ENCODE measurements at regions of chr19 and their contacts with region 1.

Region 1: GRCh38 chr19:23249911-23250649 is at the start of gene ZNF724:
- DNase-seq: peak; percentile 85
- H3K4me3 ChIP-seq: peak within 1 kb of the TSS; percentile 64 to 84
- H3K27ac ChIP-seq: peak within 1 kb of the TSS; percentile 65 to 67; a peak in 3 of 4 replicates
- H3K4me1 ChIP-seq: no peaks in the 10 kb centered on the region
- H3K27me3 ChIP-seq: no peaks in the 10 kb centered on the region
- CTCF ChIP-seq: no peak
- EP300 ChIP-seq: no peak
- RAD21 ChIP-seq: no peak
- polyA plus RNA-seq, gene ZNF724: 0.56 and 0.57 TPM in 2 replicates

Region 2: DNA sequence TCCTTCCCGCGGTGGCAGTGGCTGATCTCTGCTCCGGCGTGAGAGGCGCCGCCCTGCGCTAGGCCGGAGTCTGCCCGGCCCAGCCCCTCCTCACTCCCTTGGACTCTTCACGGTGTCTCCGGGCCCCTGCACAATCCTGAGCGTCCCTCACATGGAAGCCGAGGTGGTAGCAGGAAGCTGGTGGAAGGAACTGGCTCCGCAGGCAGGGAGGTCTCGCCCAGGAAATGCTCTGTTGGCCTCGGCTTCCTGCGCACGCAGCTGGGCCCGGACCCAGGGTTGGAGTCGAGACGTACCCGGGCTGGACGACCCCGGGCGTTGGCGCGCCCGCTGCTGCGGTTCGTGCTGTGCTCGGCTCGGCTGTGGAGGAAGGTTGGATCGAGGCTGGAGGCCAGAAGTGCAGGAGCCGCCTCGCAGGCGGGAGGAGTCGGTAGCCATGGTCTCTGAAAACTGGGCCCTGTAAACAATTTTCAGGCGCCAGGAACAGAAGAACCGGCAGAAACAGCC is 46.2 kb before region 1 on chr19:
- CTCF ChIA-PET with region 1: no interaction called
- POLR2A ChIA-PET with region 1: no interaction called
- DNase-seq: no peak
- H3K4me3 ChIP-seq: no peak overlapping the region
- H3K27ac ChIP-seq: no peak overlapping the region
- H3K4me1 ChIP-seq: no peaks in the 10 kb centered on the region
- H3K27me3 ChIP-seq: no peaks in the 10 kb centered on the region
- CTCF ChIP-seq: no peak
- EP300 ChIP-seq: no peak
- RAD21 ChIP-seq: no peak

Region 3: DNA sequence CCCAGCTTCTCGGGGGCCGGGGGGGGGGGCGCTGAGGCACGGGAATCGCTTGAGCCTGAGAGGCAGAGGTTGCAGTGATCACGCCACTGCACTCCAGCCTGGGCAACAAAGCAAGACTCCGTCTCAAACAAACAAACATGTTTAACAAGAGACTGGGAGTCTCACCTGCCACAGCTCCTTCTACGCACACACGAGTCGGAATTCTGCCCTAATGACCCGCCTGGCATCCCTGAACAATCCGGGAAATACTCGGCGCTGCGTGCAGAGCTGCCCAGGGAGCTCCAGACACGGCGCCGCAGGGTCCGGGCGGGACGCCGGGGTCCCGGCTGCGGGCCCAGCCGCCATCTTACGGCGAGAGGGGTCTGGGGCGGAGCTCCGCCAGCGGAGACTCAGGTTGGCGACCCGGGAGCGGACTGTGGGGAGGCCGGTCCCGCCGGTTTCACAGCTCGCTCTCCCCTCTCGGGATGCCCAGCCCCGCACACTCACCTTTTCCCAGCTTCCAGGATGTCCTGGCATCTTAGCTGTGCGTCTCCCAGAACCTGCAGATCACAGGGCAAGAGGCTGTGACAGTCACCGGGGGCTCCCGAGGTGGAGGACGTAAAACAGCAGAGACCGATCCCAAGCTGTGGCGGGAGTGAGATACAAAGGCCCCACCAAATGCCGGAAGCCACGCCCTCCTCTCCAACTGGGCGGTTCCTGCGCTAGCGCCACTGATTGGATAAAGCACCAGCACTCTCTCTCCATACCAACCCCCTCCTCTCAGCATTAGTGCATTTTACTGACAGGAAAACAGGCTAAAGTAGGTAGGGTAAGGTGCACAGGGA is 23.7 kb after region 1 on chr19:
- CTCF ChIA-PET with region 1: no interaction called
- POLR2A ChIA-PET with region 1: interaction called, 17 read pairs
- DNase-seq: peak; percentile 93
- H3K4me3 ChIP-seq: peak overlapping the region; percentile 84
- H3K27ac ChIP-seq: peak overlapping the region; percentile 64 to 91; a peak in 3 of 4 replicates
- H3K4me1 ChIP-seq: no peaks in the 10 kb centered on the region; a peak in 1 of 4 replicates
- H3K27me3 ChIP-seq: no peaks in the 10 kb centered on the region
- CTCF ChIP-seq: no peak
- EP300 ChIP-seq: no peak
- RAD21 ChIP-seq: peak; percentile 4; the same call in 1 of the 2 replicates

Measured in SK-N-SH (cell line).